ENCODE measurements at regions of chr13 and their contacts with region 1.

Region 1: GRCh38 chr13:73765651-73766384 is 368.4 kb downstream of the KLF12 start:
- DNase-seq: peak; percentile 69 to 95 (median 84)
- ATAC-seq: peak; percentile 83 to 91
- H3K4me3 Mint-ChIP-seq: peak overlapping the region; percentile 79 to 89 (median 86)
- H3K27ac Mint-ChIP-seq: peak overlapping the region; percentile 92 to 100 (median 98)
- H3K4me1 Mint-ChIP-seq: peaks cover 44 to 87% (median 81%) of the 10 kb centered on the region in 4 donors
- H3K27me3 Mint-ChIP-seq: no peaks in the 10 kb centered on the region

Region 2: DNA sequence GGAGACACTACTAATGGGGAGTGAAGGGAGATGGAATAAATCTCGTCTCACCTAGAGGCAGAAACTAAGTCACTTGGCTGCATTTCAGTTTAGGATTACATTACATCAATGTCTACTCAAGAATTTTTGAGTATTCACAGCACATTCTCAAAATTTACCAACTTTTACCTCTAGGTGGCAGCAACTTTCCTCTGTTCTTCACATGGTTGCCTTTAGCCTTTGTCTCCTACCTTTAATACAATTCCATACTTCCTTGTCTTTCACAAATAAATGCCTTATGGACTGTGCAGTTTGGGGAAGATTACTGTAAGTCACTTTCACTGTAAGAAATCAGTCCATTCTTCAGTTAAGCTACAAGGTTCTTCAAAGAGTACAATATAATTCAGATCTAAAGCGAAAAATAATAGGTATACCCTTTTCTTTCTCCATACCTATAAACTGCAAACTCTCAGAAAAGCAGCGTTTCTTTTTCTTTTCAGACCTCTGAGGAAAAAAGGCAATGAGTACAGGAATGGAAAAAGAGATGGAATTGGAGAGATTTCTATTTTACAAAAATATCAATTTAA is 11.0 kb before region 1 on chr13:
- POLR2A ChIA-PET with region 1: interaction called, 49 read pairs
- DNase-seq: peak in 6 of 10 donors; percentile 28 to 73 (median 48)
- ATAC-seq: peak; percentile 55 to 72
- H3K4me3 Mint-ChIP-seq: peak overlapping the region in 1 of 10 donors; percentile 9
- H3K27ac Mint-ChIP-seq: peak overlapping the region; percentile 32 to 100 (median 80)
- H3K4me1 Mint-ChIP-seq: peaks cover 30 to 59% (median 46%) of the 10 kb centered on the region in 4 donors
- H3K27me3 Mint-ChIP-seq: no peaks in the 10 kb centered on the region

Region 3: DNA sequence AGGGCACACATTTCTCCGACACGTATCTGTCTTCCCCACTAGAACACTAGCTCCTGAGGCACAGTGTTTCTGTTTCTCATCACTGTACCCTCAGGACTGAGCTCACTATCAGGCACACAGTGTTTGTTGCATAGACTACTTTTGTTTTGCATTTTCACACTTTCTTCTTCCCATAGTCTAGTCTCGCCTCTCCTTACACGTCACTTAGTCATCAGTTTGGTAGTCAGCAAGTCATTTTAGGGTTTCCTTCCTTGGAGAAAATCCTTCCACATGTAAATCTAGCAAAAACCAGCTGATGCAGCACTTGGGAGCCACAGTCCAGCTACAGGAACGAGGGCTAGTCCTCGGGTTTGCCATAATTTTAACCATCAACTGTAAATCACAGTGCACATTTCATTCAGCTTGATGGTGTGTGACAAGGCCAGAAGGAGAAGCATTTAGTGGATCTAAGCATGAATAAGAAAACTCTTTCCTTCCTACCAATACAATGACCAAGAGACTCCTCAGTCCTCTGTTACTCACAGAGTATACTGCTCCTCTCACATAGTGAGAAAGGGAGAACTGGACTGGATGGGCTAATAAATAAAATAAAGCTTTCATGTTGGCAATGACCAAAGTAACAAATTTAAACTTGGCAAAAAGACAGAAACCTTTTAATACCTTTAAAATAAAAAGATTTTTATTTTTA is 147.4 kb after region 1 on chr13:
- POLR2A ChIA-PET with region 1: no interaction called
- DNase-seq: no peak
- ATAC-seq: no peak
- H3K4me3 Mint-ChIP-seq: peak overlapping the region in 1 of 10 donors; percentile 1
- H3K27ac Mint-ChIP-seq: peak overlapping the region in 8 of 10 donors; percentile 4 to 58 (median 33)
- H3K4me1 Mint-ChIP-seq: peaks cover 25 to 45% (median 40%) of the 10 kb centered on the region in 4 donors
- H3K27me3 Mint-ChIP-seq: no peaks in the 10 kb centered on the region

Measured in naive thymus-derived CD8-positive, alpha-beta T cell (primary cell).